WTC11 (cell line): ENCODE measurements at regions of chr15 and their contacts with region 1.

Region 1: GRCh38 chr15:98647774-98648653 is at the start of gene IGF1R:
- DNase-seq: peak; percentile 69
- ATAC-seq: peak; percentile 39
- H3K4me3 Mint-ChIP-seq: peak within 1 kb of the TSS; percentile 78
- H3K27ac Mint-ChIP-seq: peak within 1 kb of the TSS; percentile 93; the same call in 1 of the 2 replicates
- H3K4me1 Mint-ChIP-seq: peaks cover 28% of the 10 kb centered on the region
- H3K27me3 Mint-ChIP-seq: no peaks in the 10 kb centered on the region; the same call in 1 of the 2 replicates
- CTCF ChIP-seq: 0 out of 2 replicates have a peak, but pooled peaks have one; percentile 5
- total RNA-seq, gene IGF1R: 116 to 125 TPM (median 120 TPM) in 3 replicates

Region 2: DNA sequence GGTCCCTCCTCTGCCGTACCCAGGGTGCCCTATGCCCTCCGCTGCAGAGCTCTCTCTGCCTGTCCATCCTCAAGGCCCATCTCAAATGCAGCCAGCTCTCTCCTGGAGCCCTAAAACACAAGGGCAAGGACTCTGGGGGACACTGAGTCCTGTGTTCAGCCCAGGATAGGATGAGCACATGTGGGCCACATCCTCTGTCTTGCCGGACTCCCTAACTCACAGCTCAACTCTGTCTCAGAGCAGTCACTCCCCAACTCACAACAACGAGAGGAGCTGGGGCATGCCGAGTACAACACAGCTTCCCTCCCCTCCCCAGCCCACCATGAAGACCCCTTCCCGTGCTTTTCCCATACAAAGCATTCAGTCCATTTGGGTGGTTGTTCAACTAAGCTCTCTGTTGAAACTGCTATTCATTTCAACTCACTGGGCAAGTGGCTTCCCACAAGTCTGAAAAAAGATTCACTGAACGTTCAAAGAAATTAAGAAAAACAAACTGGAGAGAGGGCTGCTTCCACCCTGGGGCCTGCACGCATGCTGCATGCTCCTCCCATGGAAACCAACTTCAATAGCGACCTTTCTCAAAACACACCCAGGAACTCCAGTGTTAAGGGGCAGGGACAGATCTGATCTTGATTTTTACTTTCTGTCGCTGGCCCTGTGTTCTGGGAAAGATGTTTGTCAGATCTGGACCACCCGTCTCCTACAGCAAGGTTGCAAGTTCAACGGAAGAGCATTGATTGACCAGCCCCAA is 123.9 kb before region 1 on chr15:
- CTCF ChIA-PET with region 1: interaction called, 33 read pairs
- POLR2A ChIA-PET with region 1: interaction called, 4 read pairs
- DNase-seq: no peak
- ATAC-seq: no peak
- H3K4me3 Mint-ChIP-seq: no peak overlapping the region
- H3K27ac Mint-ChIP-seq: peak overlapping the region; percentile 67; the same call in 1 of the 2 replicates
- H3K4me1 Mint-ChIP-seq: peaks cover 21% of the 10 kb centered on the region
- H3K27me3 Mint-ChIP-seq: no peaks in the 10 kb centered on the region
- CTCF ChIP-seq: no peak

Region 3: GRCh38 chr15:98554272-98555172 is 93.5 kb before region 1 on chr15:
- CTCF ChIA-PET with region 1: no interaction called
- POLR2A ChIA-PET with region 1: no interaction called
- DNase-seq: no peak
- ATAC-seq: peak; percentile 42
- H3K4me3 Mint-ChIP-seq: no peak overlapping the region
- H3K27ac Mint-ChIP-seq: no peak overlapping the region
- H3K4me1 Mint-ChIP-seq: peaks cover 50% of the 10 kb centered on the region
- H3K27me3 Mint-ChIP-seq: peaks cover 8% of the 10 kb centered on the region
- CTCF ChIP-seq: no peak

Region 4: GRCh38 chr15:98581715-98582114 is 66.3 kb before region 1 on chr15:
- CTCF ChIA-PET with region 1: interaction called, 10 read pairs
- POLR2A ChIA-PET with region 1: no interaction called
- DNase-seq: no peak
- ATAC-seq: peak; percentile 63
- H3K4me3 Mint-ChIP-seq: no peak overlapping the region
- H3K27ac Mint-ChIP-seq: no peak overlapping the region
- H3K4me1 Mint-ChIP-seq: peaks cover 20% of the 10 kb centered on the region
- H3K27me3 Mint-ChIP-seq: no peaks in the 10 kb centered on the region
- CTCF ChIP-seq: no peak

Region 5: GRCh38 chr15:98599909-98600691 is 47.9 kb before region 1 on chr15:
- CTCF ChIA-PET with region 1: no interaction called
- POLR2A ChIA-PET with region 1: no interaction called
- DNase-seq: peak; percentile 31
- ATAC-seq: peak; percentile 88
- H3K4me3 Mint-ChIP-seq: peak overlapping the region; percentile 41
- H3K27ac Mint-ChIP-seq: peak overlapping the region; percentile 84
- H3K4me1 Mint-ChIP-seq: peaks cover 35% of the 10 kb centered on the region
- H3K27me3 Mint-ChIP-seq: no peaks in the 10 kb centered on the region; the same call in 1 of the 2 replicates
- CTCF ChIP-seq: no peak

Region 6: DNA sequence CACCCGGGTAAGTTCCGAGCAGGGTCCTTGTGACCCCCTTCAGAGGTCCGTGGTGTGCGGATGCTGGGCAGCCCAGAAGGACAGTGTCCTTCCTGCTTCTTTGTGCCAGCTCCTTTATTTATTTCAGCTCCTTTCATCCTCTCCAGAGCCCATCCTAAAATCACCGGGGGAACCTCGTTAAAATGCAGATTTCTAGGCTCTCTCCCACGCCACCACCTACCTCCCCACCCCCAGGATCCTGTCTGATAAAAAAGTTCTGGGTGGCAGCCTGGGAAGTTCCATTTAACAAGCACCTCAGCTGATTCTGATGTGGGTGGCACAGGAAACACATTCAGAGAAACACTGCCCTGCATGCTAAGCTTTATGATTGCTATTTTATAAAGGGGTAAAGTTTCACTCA is 12.2 kb before region 1 on chr15:
- CTCF ChIA-PET with region 1: interaction called, 16 read pairs
- POLR2A ChIA-PET with region 1: no interaction called
- DNase-seq: no peak
- ATAC-seq: peak; percentile 54
- H3K4me3 Mint-ChIP-seq: no peak overlapping the region
- H3K27ac Mint-ChIP-seq: no peak overlapping the region
- H3K4me1 Mint-ChIP-seq: peaks cover 15% of the 10 kb centered on the region
- H3K27me3 Mint-ChIP-seq: no peaks in the 10 kb centered on the region
- CTCF ChIP-seq: no peak

Region 7: GRCh38 chr15:98763179-98763578 is 115.2 kb after region 1 on chr15:
- CTCF ChIA-PET with region 1: no interaction called
- POLR2A ChIA-PET with region 1: no interaction called
- DNase-seq: no peak
- ATAC-seq: no peak
- H3K4me3 Mint-ChIP-seq: no peak overlapping the region
- H3K27ac Mint-ChIP-seq: peak overlapping the region; percentile 85
- H3K4me1 Mint-ChIP-seq: peaks cover 73% of the 10 kb centered on the region
- H3K27me3 Mint-ChIP-seq: no peaks in the 10 kb centered on the region
- CTCF ChIP-seq: no peak